ENCODE measurements at regions of chr16 and their contacts with region 1.

Region 1: DNA sequence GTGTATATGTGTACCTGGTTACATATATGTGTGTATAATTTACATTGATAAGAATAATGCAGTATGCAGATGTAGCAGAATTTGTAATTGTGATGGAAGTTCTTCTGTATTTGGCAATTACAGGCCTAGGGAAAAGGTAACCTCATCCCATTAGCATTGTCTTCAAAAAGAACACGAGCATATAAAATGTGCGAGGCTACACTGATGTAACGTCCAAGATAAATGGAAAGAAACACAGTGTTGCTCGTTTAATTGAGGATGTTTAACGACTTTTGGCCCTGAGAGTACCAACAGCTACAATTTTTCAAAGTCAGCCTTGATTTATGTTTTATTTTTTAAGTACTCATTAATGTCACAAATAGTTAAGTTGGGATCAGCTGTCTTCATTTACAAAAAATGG is 703.5 kb upstream of the RBFOX1 start:
- DNase-seq: no peak
- H3K4me3 ChIP-seq: no peak overlapping the region
- H3K27ac ChIP-seq: no peak overlapping the region
- H3K4me1 ChIP-seq: no peaks in the 10 kb centered on the region
- H3K27me3 ChIP-seq: peaks cover 0 to 3% (median 0%) of the 10 kb centered on the region in 5 experiments

Region 2: GRCh38 chr16:6643080-6643686 is 14.1 kb after region 1 on chr16:
- CTCF ChIA-PET with region 1: interaction called, 13 read pairs
- POLR2A ChIA-PET with region 1: no interaction called
- DNase-seq: peak; percentile 22 to 73 (median 45)
- H3K4me3 ChIP-seq: no peak overlapping the region
- H3K27ac ChIP-seq: no peak overlapping the region
- H3K4me1 ChIP-seq: no peaks in the 10 kb centered on the region
- H3K27me3 ChIP-seq: peaks cover 3 to 27% (median 8%) of the 10 kb centered on the region in 5 experiments

Measured in common myeloid progenitor, CD34-positive (primary cell).